Caco-2 (cell line): ENCODE measurements at regions of chr6 and their contacts with region 1.

Region 1: DNA sequence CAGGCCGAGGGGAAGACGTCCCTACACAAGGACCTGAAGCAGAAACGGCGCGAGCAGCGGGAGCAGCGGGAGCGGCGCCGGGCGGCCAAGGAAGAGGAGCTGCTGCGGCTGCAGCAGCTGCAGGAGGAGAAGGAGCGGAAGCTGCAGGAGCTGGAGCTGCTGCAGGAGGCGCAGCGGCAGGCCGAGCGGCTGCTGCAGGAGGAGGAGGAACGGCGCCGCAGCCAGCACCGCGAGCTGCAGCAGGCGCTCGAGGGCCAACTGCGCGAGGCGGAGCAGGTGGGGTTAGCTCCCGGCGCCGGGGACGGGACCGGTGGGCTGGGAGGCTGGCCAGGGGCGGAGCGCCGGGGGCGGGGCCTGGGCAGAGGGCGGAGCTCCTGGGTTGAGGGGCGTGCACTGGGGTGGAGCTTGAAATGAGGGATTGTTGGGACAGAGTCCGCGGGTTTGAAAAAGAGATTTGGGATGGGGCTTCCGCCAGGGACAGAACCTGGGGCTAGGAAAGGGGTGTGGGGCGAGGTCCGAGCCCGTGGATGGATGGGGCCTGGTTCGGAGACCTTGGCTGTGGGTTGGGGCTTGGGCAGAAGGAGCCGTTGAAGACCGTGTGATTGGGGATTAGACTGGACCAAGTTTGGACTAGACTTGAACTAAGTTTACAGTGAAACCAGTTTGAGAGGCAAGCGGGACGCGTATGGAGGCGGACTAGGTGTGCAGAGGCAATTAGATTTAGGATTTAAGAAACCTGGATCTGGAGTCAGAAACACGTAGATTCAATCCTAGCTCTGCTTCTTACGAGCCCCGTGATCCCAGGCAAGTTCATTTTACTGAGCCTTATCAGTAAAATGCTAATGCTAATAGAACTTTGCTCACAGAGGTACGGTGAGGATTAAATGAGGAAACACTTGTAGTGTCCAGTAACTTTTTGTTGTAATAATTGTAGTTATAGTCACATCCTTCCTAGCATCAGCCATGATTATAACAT is 20.9 kb downstream of the DEF6 start:
- DNase-seq: peak; percentile 90 to 98
- H3K4me3 ChIP-seq: peak overlapping the region; percentile 59
- H3K4me3 Mint-ChIP-seq: peak overlapping the region; percentile 98
- H3K27ac Mint-ChIP-seq: peak overlapping the region; percentile 92
- H3K4me1 ChIP-seq: peaks cover 14% of the 10 kb centered on the region
- H3K4me1 Mint-ChIP-seq: peaks cover 15% of the 10 kb centered on the region
- H3K27me3 ChIP-seq: no peaks in the 10 kb centered on the region
- H3K27me3 Mint-ChIP-seq: no peaks in the 10 kb centered on the region
- CTCF ChIP-seq: peak in 1 of 2 experiments; percentile 3

Region 2: GRCh38 chr6:35305117-35305516 is 13.4 kb before region 1 on chr6:
- CTCF ChIA-PET with region 1: no interaction called
- POLR2A ChIA-PET with region 1: no interaction called
- intact Hi-C with region 1: loop called (anchors 1 kb)
- DNase-seq: no peak
- H3K4me3 ChIP-seq: no peak overlapping the region
- H3K4me3 Mint-ChIP-seq: no peak overlapping the region
- H3K27ac Mint-ChIP-seq: no peak overlapping the region
- H3K4me1 ChIP-seq: no peaks in the 10 kb centered on the region
- H3K4me1 Mint-ChIP-seq: peaks cover 7% of the 10 kb centered on the region
- H3K27me3 ChIP-seq: no peaks in the 10 kb centered on the region
- H3K27me3 Mint-ChIP-seq: peaks cover 3% of the 10 kb centered on the region
- CTCF ChIP-seq: no peak

Region 3: DNA sequence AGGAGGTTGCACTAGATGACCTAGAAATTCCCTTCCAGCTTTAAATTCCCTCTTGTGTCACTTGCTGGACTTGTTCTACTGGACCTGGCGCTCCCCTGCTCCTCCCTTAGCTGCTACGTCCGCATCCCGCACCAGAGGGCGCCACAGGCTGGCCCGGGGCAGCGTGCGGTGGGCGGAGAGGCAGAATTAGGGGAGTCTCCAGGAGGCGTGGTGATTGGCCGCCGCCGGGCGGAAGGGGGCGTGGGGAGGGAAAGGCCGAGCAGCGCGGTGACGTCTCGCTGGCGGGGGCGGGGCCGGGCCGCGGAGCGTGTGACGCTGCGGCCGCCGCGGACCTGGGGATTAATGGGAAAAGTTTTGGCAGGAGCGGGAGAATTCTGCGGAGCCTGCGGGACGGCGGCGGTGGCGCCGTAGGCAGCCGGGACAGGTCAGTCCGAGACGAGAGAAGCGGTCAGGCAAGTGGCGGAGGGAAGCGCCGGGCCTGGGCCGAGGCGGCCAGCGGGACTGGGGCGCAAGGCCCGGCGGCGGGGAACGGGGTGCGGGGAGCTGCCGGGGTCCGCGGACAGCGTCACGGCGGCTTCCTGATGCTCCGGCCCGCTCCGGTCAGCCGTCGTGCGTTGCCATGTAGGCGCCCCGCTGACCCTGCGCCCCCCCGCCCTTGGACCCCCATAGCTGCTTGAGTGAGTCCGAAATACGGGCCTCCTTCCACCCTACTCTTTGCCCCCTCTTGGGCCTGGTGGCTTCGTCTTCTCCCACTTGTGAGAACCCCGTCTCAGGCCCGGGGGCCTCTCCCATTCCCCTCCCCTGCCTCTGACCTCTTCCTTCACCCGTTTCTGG is 24.0 kb after region 1 on chr6 and contains the start of gene PPARD:
- CTCF ChIA-PET with region 1: interaction called, 19 read pairs
- POLR2A ChIA-PET with region 1: no interaction called
- intact Hi-C with region 1: no loop called
- DNase-seq: peak; percentile 97 to 99
- H3K4me3 ChIP-seq: peak within 1 kb of the TSS; percentile 84
- H3K4me3 Mint-ChIP-seq: peak within 1 kb of the TSS; percentile 85
- H3K27ac Mint-ChIP-seq: peak within 1 kb of the TSS; percentile 78
- H3K4me1 ChIP-seq: peaks cover 6% of the 10 kb centered on the region
- H3K4me1 Mint-ChIP-seq: no peaks in the 10 kb centered on the region
- H3K27me3 ChIP-seq: no peaks in the 10 kb centered on the region
- H3K27me3 Mint-ChIP-seq: no peaks in the 10 kb centered on the region
- CTCF ChIP-seq: peak; percentile 88 to 97
- total RNA-seq, gene PPARD: 11.3 and 12.0 TPM in 2 replicates

Region 4: DNA sequence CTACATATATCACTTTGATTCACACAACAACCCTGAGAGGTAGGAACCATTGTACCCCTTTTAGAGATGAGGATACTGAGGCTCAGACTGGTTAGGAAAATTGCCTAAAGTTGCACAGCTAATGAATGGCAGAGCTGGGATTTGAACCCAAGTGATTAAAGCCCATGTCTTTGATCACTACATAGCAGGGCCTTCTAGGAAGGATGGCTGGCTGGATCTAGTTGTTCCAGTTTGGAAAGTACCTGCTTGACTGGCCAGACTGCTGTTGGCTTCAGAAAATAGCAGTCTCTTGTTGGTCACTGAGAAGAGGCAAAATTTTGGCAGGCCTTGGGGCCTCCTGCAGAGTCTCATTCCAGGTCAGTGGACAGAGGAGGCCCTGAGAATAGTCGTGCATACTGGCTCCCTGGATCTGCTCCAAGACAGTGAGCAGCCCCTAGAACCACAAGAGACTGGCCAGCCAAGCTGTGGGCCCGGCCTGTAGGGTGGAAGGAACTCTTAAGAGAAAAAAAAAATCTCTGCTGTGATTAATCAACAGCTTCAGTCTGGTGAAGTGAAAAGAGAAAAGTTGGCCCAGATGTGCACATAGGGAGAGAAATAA is 41.4 kb after region 1 on chr6:
- CTCF ChIA-PET with region 1: no interaction called
- POLR2A ChIA-PET with region 1: no interaction called
- intact Hi-C with region 1: loop called (anchors 1 kb)
- DNase-seq: no peak
- H3K4me3 ChIP-seq: no peak overlapping the region
- H3K4me3 Mint-ChIP-seq: no peak overlapping the region
- H3K27ac Mint-ChIP-seq: no peak overlapping the region
- H3K4me1 ChIP-seq: peaks cover 12% of the 10 kb centered on the region; the same call in 1 of the 2 replicates
- H3K4me1 Mint-ChIP-seq: peaks cover 8% of the 10 kb centered on the region
- H3K27me3 ChIP-seq: no peaks in the 10 kb centered on the region
- H3K27me3 Mint-ChIP-seq: no peaks in the 10 kb centered on the region
- CTCF ChIP-seq: no peak